ENCODE measurements at regions of chr1 and their contacts with region 1.

Region 1: DNA sequence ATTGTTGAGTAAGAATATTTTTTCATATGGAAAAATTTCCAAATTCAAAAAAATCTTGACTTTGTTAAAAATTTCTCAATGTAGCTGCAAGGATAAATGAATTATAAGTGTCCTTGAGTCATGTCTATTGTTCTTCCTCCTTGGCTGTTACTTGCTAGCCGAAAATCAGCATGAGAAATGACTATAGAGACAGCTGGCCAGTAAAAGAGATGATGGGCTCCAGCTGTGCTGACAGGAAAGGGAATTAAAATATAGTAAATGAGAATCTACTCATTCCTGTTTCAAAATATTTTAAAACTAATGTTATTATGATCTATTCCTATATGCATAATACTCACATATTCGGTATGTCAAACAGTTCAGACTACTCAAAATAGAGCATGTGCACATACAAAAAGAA is 1292.6 kb downstream of the BRINP3 start:
- DNase-seq: no peak
- ATAC-seq: no peak
- H3K4me3 ChIP-seq: no peak overlapping the region
- H3K27ac ChIP-seq: no peak overlapping the region
- H3K4me1 ChIP-seq: no peaks in the 10 kb centered on the region
- H3K27me3 ChIP-seq: no peaks in the 10 kb centered on the region
- CTCF ChIP-seq: no peak
- EP300 ChIP-seq: no peak
- POLR2A ChIP-seq: no peak
- RAD21 ChIP-seq: no peak

Region 2: DNA sequence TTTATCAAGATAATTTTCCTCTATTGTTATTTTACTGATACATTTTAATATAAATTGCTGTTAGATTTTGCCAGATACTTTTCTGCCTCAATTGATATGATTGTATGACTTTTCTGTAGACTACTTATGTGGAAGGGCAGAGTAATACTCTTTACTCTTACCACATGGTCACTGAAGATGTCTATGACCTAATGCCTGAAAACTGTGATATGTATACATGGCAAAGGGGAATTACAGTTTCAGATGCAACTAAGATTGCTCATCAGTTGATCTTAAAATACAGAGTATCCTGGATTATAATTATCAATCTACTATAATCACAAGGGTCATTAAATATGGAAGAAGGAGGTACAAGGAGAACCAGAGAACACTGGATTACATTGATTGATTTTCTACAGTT is 235.4 kb before region 1 on chr1:
- CTCF ChIA-PET with region 1: no interaction called
- POLR2A ChIA-PET with region 1: no interaction called
- in situ Hi-C with region 1: no loop called
- intact Hi-C with region 1: no loop called
- DNase-seq: no peak
- ATAC-seq: no peak
- H3K4me3 ChIP-seq: no peak overlapping the region
- H3K27ac ChIP-seq: no peak overlapping the region
- H3K4me1 ChIP-seq: no peaks in the 10 kb centered on the region
- H3K27me3 ChIP-seq: no peaks in the 10 kb centered on the region
- CTCF ChIP-seq: no peak
- EP300 ChIP-seq: no peak
- POLR2A ChIP-seq: no peak
- RAD21 ChIP-seq: no peak

Region 3: DNA sequence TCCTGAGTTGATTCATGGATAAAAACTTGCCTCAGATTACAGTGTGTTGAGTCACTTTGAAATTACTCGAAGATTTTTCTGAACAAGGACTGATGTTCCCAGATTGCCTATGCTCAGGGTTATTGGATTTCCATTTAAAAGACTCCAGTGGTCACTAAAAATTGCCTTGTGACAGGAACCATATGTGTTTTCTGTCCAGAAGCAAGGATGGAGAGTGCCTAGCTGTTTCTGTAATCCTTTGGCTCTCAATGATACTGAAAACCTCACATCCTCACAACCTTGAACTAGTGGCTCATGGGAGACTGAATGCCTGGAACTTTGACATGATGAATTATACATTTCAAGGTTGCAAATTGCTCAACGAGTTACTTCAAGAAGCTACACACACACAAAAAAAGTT is 20.8 kb after region 1 on chr1:
- CTCF ChIA-PET with region 1: no interaction called
- POLR2A ChIA-PET with region 1: no interaction called
- in situ Hi-C with region 1: no loop called
- intact Hi-C with region 1: loop called (anchors 1 kb)
- DNase-seq: no peak
- ATAC-seq: no peak
- H3K4me3 ChIP-seq: no peak overlapping the region
- H3K27ac ChIP-seq: no peak overlapping the region
- H3K4me1 ChIP-seq: no peaks in the 10 kb centered on the region
- H3K27me3 ChIP-seq: no peaks in the 10 kb centered on the region
- CTCF ChIP-seq: no peak
- EP300 ChIP-seq: no peak
- POLR2A ChIP-seq: no peak
- RAD21 ChIP-seq: no peak

Measured in K562 (cell line).